ENCODE measurements at regions of chr9 and their contacts with region 1.

Region 1: GRCh38 chr9:131709771-131710454 is 30.0 kb downstream of the RAPGEF1 start:
- DNase-seq: peak; percentile 77
- ATAC-seq: peak; percentile 76
- H3K4me3 ChIP-seq: peak overlapping the region; percentile 57
- H3K27ac ChIP-seq: peak overlapping the region; percentile 83
- H3K4me1 ChIP-seq: peaks cover 60% of the 10 kb centered on the region
- H3K27me3 ChIP-seq: no peaks in the 10 kb centered on the region
- CTCF ChIP-seq: 0 out of 6 replicates have a peak, but pooled peaks of 1 of the 3 experiments have one; percentile 8
- EP300 ChIP-seq: peak in 1 of 2 experiments; percentile 82; a peak in 3 of 4 replicates
- POLR2A ChIP-seq: no peak
- RAD21 ChIP-seq: no peak

Region 2: DNA sequence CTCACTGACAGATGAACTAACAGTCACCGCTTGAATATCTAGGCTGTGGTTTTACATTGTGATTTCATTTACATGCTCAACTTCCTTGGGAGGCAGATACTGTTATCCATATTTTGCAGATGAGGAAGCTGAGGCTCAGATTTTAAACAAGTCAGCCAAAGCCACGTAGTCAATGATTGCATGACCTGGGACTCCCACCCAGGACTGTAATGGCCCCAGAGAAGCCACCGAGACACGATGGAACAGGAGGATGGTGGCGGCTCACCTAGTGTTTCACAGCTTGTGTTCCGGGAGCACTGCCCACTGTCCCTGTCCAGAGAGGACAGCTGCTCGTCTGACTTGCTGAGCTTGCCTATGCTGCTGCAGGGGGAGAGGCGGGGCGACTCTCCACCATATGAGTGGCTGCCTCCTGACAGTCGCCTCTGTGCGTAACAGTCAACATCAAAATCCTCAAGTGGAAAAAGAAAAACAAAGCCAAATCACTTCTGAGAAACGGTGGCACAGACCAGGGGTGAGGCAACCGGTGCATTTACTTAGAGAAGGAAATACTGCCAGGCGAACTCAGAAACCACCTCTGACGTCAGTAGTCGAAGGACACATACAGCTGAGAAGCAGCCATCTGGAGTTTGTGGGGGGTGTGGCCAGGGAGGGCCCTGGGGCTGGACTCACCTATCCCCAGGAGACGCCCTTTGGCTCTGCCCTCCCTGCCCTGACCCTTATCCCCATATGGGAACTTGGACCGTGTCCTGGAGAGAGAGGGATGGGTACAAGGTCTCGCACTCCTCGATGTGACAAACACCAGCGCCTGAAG is 82.1 kb before region 1 on chr9:
- CTCF ChIA-PET with region 1: interaction called, 8 read pairs
- POLR2A ChIA-PET with region 1: interaction called, 16 read pairs
- RAD21 ChIA-PET with region 1: interaction called, 21 read pairs
- SMC1A ChIA-PET with region 1: interaction called, 19 read pairs
- in situ Hi-C with region 1: no loop called
- intact Hi-C with region 1: no loop called
- DNase-seq: no peak
- ATAC-seq: peak; percentile 48
- H3K4me3 ChIP-seq: no peak overlapping the region
- H3K27ac ChIP-seq: peak overlapping the region; percentile 88
- H3K4me1 ChIP-seq: peaks cover 44% of the 10 kb centered on the region
- H3K27me3 ChIP-seq: no peaks in the 10 kb centered on the region
- CTCF ChIP-seq: no peak
- EP300 ChIP-seq: no peak
- POLR2A ChIP-seq: 0 out of 2 replicates have a peak, but pooled peaks have one; percentile 22
- RAD21 ChIP-seq: no peak

Region 3: GRCh38 chr9:131656356-131657036 is 53.4 kb before region 1 on chr9:
- CTCF ChIA-PET with region 1: interaction called, 3 read pairs
- POLR2A ChIA-PET with region 1: interaction called, 4 read pairs
- RAD21 ChIA-PET with region 1: interaction called, 12 read pairs
- SMC1A ChIA-PET with region 1: interaction called, 11 read pairs
- in situ Hi-C with region 1: no loop called
- intact Hi-C with region 1: no loop called
- DNase-seq: peak; percentile 87
- ATAC-seq: peak; percentile 94
- H3K4me3 ChIP-seq: peak overlapping the region; percentile 47; the same call in 1 of the 2 replicates
- H3K27ac ChIP-seq: peak overlapping the region; percentile 72
- H3K4me1 ChIP-seq: peaks cover 57% of the 10 kb centered on the region
- H3K27me3 ChIP-seq: no peaks in the 10 kb centered on the region
- CTCF ChIP-seq: no peak
- EP300 ChIP-seq: no peak
- POLR2A ChIP-seq: no peak; the same call in 1 of the 2 replicates
- RAD21 ChIP-seq: no peak

Region 4: DNA sequence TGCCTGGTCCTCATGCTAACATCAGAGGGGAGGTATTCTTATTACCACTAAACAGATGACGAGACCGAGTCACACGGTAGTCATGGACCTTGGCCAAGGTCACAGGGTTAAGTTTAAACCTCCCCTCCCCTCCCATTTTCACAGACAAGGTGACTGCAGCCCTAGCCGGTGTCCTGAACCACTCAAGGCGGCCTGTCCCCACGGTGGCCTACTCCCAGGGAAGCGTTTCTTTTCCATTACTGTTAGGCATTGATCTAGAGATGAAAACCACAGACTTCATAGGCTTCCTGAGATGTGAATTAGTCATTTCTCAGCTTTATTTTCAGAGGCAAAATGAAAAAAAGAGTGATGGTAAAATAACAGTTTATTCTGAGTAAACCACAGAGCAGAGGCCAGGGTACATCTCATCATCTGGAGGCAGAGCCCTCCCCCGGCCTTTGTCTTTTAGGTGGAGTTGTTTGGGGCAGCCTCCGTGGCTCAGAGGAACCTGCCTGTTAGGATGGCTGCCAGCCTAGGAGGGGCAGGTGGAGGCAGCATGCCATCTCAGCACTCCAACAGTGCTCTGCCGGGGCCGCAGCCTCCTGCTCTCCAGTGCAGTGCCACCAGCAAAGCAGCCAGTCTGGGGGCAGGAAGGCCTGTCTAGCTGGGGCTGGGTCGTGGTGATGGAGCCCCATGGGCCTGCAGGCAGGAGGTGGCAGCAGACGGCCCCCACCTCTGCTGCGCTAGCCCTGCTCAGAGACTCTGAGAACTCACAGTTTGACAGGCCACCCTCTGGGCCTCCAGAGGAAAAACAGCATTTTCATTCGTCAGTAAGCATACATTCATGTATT is 41.3 kb before region 1 on chr9:
- CTCF ChIA-PET with region 1: interaction called, 73 read pairs
- POLR2A ChIA-PET with region 1: interaction called, 21 read pairs
- RAD21 ChIA-PET with region 1: interaction called, 23 read pairs
- SMC1A ChIA-PET with region 1: interaction called, 19 read pairs
- in situ Hi-C with region 1: no loop called
- intact Hi-C with region 1: loop called (anchors 5 kb)
- DNase-seq: peak; percentile 62
- ATAC-seq: peak; percentile 74
- H3K4me3 ChIP-seq: peak overlapping the region; percentile 54
- H3K27ac ChIP-seq: peak overlapping the region; percentile 88
- H3K4me1 ChIP-seq: peaks cover 72% of the 10 kb centered on the region
- H3K27me3 ChIP-seq: no peaks in the 10 kb centered on the region
- CTCF ChIP-seq: peak; percentile 3 to 5 (median 4); a peak in 1 of 6 replicates
- EP300 ChIP-seq: peak; percentile 25 to 47; a peak in 2 of 4 replicates
- POLR2A ChIP-seq: peak; percentile 11; the same call in 1 of the 2 replicates
- RAD21 ChIP-seq: no peak; the same call in 1 of the 2 replicates

Region 5: GRCh38 chr9:131697097-131697496 is 12.8 kb before region 1 on chr9:
- CTCF ChIA-PET with region 1: interaction called, 5 read pairs
- POLR2A ChIA-PET with region 1: interaction called, 6 read pairs
- RAD21 ChIA-PET with region 1: interaction called, 9 read pairs
- SMC1A ChIA-PET with region 1: interaction called, 52 read pairs
- in situ Hi-C with region 1: no loop called
- intact Hi-C with region 1: no loop called
- DNase-seq: no peak
- ATAC-seq: no peak
- H3K4me3 ChIP-seq: no peak overlapping the region
- H3K27ac ChIP-seq: no peak overlapping the region
- H3K4me1 ChIP-seq: peaks cover 30% of the 10 kb centered on the region
- H3K27me3 ChIP-seq: no peaks in the 10 kb centered on the region
- CTCF ChIP-seq: no peak
- EP300 ChIP-seq: no peak
- POLR2A ChIP-seq: no peak
- RAD21 ChIP-seq: no peak

Region 6: DNA sequence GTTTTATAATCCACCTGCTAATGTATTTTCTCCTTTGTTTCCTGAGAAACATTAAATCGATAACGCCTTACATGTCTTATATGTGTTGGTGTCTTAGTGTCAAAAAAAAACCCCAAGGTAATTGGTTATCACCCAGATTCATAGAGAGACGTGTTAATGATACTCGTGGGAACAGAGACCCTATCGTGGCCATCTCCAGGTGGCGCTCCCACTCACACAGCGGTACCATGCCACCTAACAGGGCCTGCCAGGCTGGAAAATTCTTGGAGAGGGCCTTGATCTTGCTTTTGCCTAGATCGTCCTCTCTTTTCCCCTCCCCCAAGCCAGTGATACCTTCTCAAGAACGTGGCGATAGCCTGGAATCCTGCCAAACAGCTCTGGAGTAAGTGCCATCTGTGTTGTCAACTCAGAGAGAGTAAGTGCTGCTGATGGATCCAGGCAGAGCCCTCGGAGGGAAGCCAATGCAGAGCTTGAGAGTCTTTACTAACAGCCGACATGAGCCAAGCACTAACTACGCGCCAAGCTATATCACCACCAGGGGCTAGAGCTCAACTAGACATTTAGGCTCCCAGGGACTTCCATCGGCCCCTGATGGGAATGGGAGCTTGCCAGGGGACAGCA is 12.2 kb after region 1 on chr9:
- CTCF ChIA-PET with region 1: interaction called, 53 read pairs
- POLR2A ChIA-PET with region 1: interaction called, 291 read pairs
- RAD21 ChIA-PET with region 1: interaction called, 362 read pairs
- SMC1A ChIA-PET with region 1: interaction called, 416 read pairs
- in situ Hi-C with region 1: no loop called
- intact Hi-C with region 1: no loop called
- DNase-seq: no peak
- ATAC-seq: no peak
- H3K4me3 ChIP-seq: no peak overlapping the region
- H3K27ac ChIP-seq: no peak overlapping the region
- H3K4me1 ChIP-seq: peaks cover 66% of the 10 kb centered on the region
- H3K27me3 ChIP-seq: no peaks in the 10 kb centered on the region
- CTCF ChIP-seq: no peak
- EP300 ChIP-seq: no peak
- POLR2A ChIP-seq: no peak
- RAD21 ChIP-seq: no peak

Measured in GM12878 (cell line).